ENCODE measurements at regions of chr10 and their contacts with region 1.

Region 1: DNA sequence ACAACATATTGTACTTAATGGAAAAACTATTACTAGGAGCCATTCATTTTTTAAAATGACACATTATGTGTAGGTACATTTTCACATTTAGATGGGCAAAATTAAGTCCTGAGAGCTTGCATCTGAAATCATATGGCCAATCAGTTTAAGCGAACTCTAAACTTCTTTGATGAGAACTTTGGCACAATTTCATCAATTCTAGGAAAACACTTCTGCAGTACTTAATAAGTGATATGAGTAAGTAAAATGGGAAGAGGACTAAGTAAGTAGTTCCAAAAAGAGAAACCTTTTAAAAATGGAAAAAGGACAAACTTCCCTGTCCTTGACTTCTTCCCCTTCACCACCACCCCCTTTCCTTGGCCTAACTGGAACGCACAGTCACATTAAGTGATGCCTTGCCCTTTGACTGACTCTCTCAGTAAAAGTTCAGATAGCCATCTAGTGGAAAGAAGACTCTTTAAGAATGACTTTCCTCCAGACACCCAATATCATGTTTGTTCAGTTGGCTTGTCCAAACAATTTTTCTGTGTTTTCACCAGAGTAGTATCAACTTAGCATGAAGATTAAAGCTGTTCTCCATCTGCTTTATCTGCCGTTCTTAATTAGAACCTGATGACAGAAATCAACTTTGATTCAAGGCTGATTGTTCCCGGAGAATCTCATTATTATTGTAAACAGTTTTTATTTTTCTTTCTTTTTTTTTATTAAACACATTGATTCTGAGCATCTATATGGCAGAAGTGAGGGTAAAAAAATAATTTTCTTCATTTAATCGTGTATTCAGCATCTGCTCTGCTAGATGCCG is 45.1 kb downstream of the CNNM2 start:
- DNase-seq: no peak
- H3K4me3 ChIP-seq: no peak overlapping the region
- H3K4me3 Mint-ChIP-seq: no peak overlapping the region
- H3K27ac ChIP-seq: no peak overlapping the region
- H3K27ac Mint-ChIP-seq: no peak overlapping the region
- H3K4me1 ChIP-seq: no peaks in the 10 kb centered on the region
- H3K4me1 Mint-ChIP-seq: no peaks in the 10 kb centered on the region
- H3K27me3 ChIP-seq: no peaks in the 10 kb centered on the region
- H3K27me3 Mint-ChIP-seq: no peaks in the 10 kb centered on the region

Region 2: GRCh38 chr10:102998005-102998404 is 34.9 kb after region 1 on chr10:
- CTCF ChIA-PET with region 1: no interaction called
- POLR2A ChIA-PET with region 1: no interaction called
- DNase-seq: no peak
- H3K4me3 ChIP-seq: no peak overlapping the region
- H3K4me3 Mint-ChIP-seq: no peak overlapping the region
- H3K27ac ChIP-seq: no peak overlapping the region
- H3K27ac Mint-ChIP-seq: no peak overlapping the region
- H3K4me1 ChIP-seq: peaks cover 12% of the 10 kb centered on the region
- H3K4me1 Mint-ChIP-seq: peaks cover 10 to 26% (median 21%) of the 10 kb centered on the region in 3 donors
- H3K27me3 ChIP-seq: no peaks in the 10 kb centered on the region
- H3K27me3 Mint-ChIP-seq: peaks cover 0 to 3% of the 10 kb centered on the region in 2 donors

Region 3: DNA sequence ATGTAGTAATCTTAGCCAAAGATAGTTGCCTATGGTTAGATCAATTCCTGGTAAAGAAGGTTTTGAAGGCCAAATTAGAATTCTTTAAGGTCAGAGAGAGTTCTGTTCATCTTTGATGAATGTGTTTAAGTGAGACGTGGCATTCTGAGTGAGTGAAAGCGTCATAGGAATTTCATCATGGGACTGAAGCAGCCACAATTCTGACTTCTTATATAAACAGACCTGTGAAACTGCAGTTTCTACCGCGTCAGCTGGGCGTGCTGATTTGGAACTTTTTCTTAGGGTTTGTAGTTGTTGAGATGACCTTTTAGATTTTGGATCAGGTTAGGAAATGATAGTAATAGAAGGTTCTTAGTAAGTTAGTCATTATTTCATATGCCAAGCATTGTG is 58.7 kb after region 1 on chr10:
- CTCF ChIA-PET with region 1: no interaction called
- POLR2A ChIA-PET with region 1: interaction called, 10 read pairs
- DNase-seq: no peak
- H3K4me3 ChIP-seq: no peak overlapping the region
- H3K4me3 Mint-ChIP-seq: no peak overlapping the region
- H3K27ac ChIP-seq: no peak overlapping the region
- H3K27ac Mint-ChIP-seq: no peak overlapping the region
- H3K4me1 ChIP-seq: no peaks in the 10 kb centered on the region
- H3K4me1 Mint-ChIP-seq: peaks cover 0 to 2% (median 0%) of the 10 kb centered on the region in 3 donors
- H3K27me3 ChIP-seq: no peaks in the 10 kb centered on the region
- H3K27me3 Mint-ChIP-seq: no peaks in the 10 kb centered on the region

Measured in CD8-positive, alpha-beta memory T cell (primary cell).